CD8-positive, alpha-beta memory T cell (primary cell): ENCODE measurements at regions of chr18 and their contacts with region 1.

Region 1: DNA sequence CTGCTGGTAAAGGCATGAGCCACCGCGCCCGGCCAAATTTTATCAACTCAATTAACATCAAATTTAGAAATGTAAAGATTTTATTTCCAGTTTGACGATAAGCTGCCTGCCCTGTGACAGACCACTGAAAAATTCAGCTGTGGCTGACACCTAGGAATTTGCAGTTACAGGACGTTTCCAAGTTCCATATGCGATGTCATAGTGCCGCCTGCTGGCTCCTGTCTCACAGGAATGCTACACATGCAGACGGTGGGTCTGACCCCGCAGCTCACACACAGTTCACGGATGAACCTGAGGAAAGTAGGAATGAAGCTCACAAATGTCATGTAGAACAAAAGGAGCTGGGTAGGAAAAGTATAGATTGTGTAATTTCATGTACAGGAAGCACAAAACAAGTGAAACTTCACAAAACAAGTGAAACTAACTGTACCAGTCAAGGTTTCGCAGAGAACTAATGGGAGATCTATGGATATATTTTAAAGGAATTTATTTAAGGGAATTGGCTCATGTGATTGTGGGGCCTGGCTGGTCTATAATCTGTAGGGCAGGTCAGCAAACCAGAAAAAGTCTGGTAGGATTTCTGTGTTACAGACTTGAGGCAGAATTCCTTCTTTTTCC is 13.2 kb upstream of the SEH1L start:
- DNase-seq: peak; percentile 64 to 86 (median 72)
- H3K4me3 ChIP-seq: no peak overlapping the region
- H3K4me3 Mint-ChIP-seq: peak overlapping the region in 1 of 7 donors; percentile 42
- H3K27ac ChIP-seq: no peak overlapping the region
- H3K27ac Mint-ChIP-seq: peak overlapping the region in 1 of 8 donors; percentile 64
- H3K4me1 ChIP-seq: peaks cover 6% of the 10 kb centered on the region
- H3K4me1 Mint-ChIP-seq: peaks cover 13 to 15% (median 14%) of the 10 kb centered on the region in 3 donors
- H3K27me3 ChIP-seq: no peaks in the 10 kb centered on the region
- H3K27me3 Mint-ChIP-seq: peaks cover 3 to 4% of the 10 kb centered on the region in 2 donors

Region 2: DNA sequence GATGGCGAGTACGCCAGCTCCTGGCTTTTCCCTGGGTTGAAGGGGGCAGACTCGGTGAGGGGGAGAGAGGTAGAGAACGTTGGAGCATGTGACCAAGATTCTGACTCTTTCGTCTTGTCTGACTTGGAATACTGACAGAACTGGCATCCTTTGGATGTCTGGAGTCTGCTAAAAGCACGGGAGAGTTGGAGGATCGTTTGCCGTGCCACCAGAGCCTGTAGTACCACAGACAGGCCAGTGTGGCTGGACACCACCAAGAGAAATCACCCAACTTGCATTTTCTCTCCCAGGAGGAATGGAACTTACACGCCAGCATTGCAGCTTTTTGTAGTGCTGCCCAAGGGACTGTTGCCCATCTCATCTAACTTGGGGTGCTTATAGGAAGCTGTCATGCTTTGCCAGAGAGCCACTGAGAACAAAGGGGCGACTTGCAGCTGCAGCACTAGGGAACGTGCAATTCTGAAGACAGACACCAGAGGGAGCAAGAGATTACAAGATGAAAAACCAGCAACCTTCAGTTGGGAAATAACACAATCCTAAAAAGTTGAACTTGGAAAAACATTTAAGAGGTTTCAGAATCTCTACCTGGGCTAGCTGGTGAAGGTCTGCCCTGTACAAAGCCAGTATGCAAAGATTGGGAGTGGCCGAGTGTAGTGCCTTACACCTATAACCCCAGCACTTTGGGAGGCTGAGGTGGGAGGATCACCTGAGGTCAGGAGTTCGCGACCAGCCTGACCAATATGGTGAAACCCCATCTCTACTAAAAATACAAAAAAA is 207.6 kb before region 1 on chr18:
- CTCF ChIA-PET with region 1: interaction called, 122 read pairs
- POLR2A ChIA-PET with region 1: no interaction called
- DNase-seq: peak; percentile 45 to 62 (median 55)
- H3K4me3 ChIP-seq: no peak overlapping the region
- H3K4me3 Mint-ChIP-seq: no peak overlapping the region
- H3K27ac ChIP-seq: no peak overlapping the region
- H3K27ac Mint-ChIP-seq: peak overlapping the region in 5 of 8 donors; percentile 10 to 72 (median 23)
- H3K4me1 ChIP-seq: no peaks in the 10 kb centered on the region
- H3K4me1 Mint-ChIP-seq: peaks cover 0 to 2% (median under 1%) of the 10 kb centered on the region in 3 donors
- H3K27me3 ChIP-seq: no peaks in the 10 kb centered on the region
- H3K27me3 Mint-ChIP-seq: no peaks in the 10 kb centered on the region

Region 3: GRCh38 chr18:12744103-12744502 is 190.5 kb before region 1 on chr18:
- CTCF ChIA-PET with region 1: interaction called, 45 read pairs
- POLR2A ChIA-PET with region 1: no interaction called
- DNase-seq: peak in 2 of 5 donors; percentile 12 to 34
- H3K4me3 ChIP-seq: no peak overlapping the region
- H3K4me3 Mint-ChIP-seq: no peak overlapping the region
- H3K27ac ChIP-seq: no peak overlapping the region
- H3K27ac Mint-ChIP-seq: no peak overlapping the region
- H3K4me1 ChIP-seq: no peaks in the 10 kb centered on the region
- H3K4me1 Mint-ChIP-seq: no peaks in the 10 kb centered on the region
- H3K27me3 ChIP-seq: no peaks in the 10 kb centered on the region
- H3K27me3 Mint-ChIP-seq: peaks cover 0 to under 1% of the 10 kb centered on the region in 2 donors

Region 4: GRCh38 chr18:12890506-12890905 is 44.1 kb before region 1 on chr18:
- CTCF ChIA-PET with region 1: interaction called, 23 read pairs
- POLR2A ChIA-PET with region 1: no interaction called
- DNase-seq: no peak
- H3K4me3 ChIP-seq: no peak overlapping the region
- H3K4me3 Mint-ChIP-seq: no peak overlapping the region
- H3K27ac ChIP-seq: no peak overlapping the region
- H3K27ac Mint-ChIP-seq: no peak overlapping the region
- H3K4me1 ChIP-seq: peaks cover under 1% of the 10 kb centered on the region
- H3K4me1 Mint-ChIP-seq: peaks cover 5 to 24% (median 17%) of the 10 kb centered on the region in 3 donors
- H3K27me3 ChIP-seq: no peaks in the 10 kb centered on the region
- H3K27me3 Mint-ChIP-seq: peaks cover 10 to 13% of the 10 kb centered on the region in 2 donors

Region 5: GRCh38 chr18:12921178-12921577 is 13.4 kb before region 1 on chr18:
- CTCF ChIA-PET with region 1: interaction called, 36 read pairs
- POLR2A ChIA-PET with region 1: interaction called, 5 read pairs
- DNase-seq: peak in 4 of 5 donors; percentile 29 to 79 (median 53)
- H3K4me3 ChIP-seq: peak overlapping the region; percentile 14
- H3K4me3 Mint-ChIP-seq: peak overlapping the region; percentile 42 to 80 (median 72)
- H3K27ac ChIP-seq: peak overlapping the region; percentile 48
- H3K27ac Mint-ChIP-seq: peak overlapping the region; percentile 70 to 91 (median 81)
- H3K4me1 ChIP-seq: peaks cover 6% of the 10 kb centered on the region
- H3K4me1 Mint-ChIP-seq: peaks cover 21 to 36% (median 29%) of the 10 kb centered on the region in 3 donors
- H3K27me3 ChIP-seq: no peaks in the 10 kb centered on the region
- H3K27me3 Mint-ChIP-seq: no peaks in the 10 kb centered on the region

Region 6: GRCh38 chr18:13159579-13159978 is 225.0 kb after region 1 on chr18:
- CTCF ChIA-PET with region 1: interaction called, 10 read pairs
- POLR2A ChIA-PET with region 1: no interaction called
- DNase-seq: peak in 2 of 5 donors; percentile 36 to 65
- H3K4me3 ChIP-seq: no peak overlapping the region
- H3K4me3 Mint-ChIP-seq: peak overlapping the region in 1 of 7 donors; percentile 6
- H3K27ac ChIP-seq: no peak overlapping the region
- H3K27ac Mint-ChIP-seq: no peak overlapping the region
- H3K4me1 ChIP-seq: peaks cover 3% of the 10 kb centered on the region
- H3K4me1 Mint-ChIP-seq: peaks cover 2 to 5% (median 4%) of the 10 kb centered on the region in 3 donors
- H3K27me3 ChIP-seq: no peaks in the 10 kb centered on the region
- H3K27me3 Mint-ChIP-seq: peaks cover 7 to 30% of the 10 kb centered on the region in 2 donors